Posterior vena cava (tissue), 2 donors: ENCODE measurements at regions of chr12 and their contacts with region 1.

Region 1: GRCh38 chr12:108712165-108712924 is 19.0 kb downstream of the CORO1C start:
- DNase-seq: no peak

Region 2: DNA sequence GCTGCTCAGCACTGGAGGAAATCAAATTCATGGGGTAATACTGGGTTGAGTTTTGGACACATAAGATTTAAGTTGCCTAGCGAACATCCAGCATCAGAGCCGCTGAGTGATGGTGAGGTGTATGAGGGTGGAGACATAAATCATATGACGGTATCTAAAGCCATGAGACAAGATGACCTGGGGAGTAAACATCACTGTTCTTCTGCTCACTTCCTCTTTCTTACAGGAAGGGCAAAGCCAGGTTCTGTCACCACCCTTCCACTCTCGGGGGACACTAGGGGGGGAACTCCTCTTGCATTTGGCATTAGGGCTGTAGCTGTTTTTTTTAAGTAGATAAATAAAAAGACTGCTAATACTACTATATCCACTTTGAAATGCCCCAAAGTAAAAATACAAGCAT is 975.4 kb before region 1 on chr12:
- intact Hi-C with region 1: loop called in 1 of 2 experiments (anchors 10 kb)
- DNase-seq: no peak

Region 3: GRCh38 chr12:108685469-108686260 is 26.7 kb before region 1 on chr12:
- intact Hi-C with region 1: no loop called
- DNase-seq: no peak